ENCODE measurements at regions of chr20 and their contacts with region 1.

Region 1: DNA sequence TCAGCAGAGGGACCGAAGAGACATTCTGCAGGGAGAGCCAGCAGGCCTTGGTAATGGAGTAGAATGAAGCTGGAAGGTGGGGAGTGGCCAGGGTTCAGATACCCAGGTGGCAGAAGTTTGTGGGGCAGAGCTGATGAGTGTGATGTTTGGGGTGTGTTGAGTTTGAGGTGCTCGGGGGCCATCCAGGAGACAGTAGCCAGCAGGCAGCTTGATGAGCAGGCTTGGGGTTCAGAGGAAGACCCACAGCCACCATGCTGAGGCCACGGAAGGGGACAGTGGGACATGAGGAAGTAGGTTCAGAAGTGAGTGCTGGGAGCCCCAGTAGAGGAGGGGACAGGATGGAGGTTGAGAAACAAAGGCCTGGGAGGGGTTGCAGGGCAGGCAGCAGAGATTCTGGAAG is 11.1 kb upstream of the FOXS1 start:
- DNase-seq: no peak
- ATAC-seq: no peak
- H3K4me3 Mint-ChIP-seq: no peak overlapping the region
- H3K27ac Mint-ChIP-seq: no peak overlapping the region
- H3K4me1 Mint-ChIP-seq: peaks cover 6% of the 10 kb centered on the region
- H3K27me3 Mint-ChIP-seq: peaks cover 26% of the 10 kb centered on the region

Region 2: DNA sequence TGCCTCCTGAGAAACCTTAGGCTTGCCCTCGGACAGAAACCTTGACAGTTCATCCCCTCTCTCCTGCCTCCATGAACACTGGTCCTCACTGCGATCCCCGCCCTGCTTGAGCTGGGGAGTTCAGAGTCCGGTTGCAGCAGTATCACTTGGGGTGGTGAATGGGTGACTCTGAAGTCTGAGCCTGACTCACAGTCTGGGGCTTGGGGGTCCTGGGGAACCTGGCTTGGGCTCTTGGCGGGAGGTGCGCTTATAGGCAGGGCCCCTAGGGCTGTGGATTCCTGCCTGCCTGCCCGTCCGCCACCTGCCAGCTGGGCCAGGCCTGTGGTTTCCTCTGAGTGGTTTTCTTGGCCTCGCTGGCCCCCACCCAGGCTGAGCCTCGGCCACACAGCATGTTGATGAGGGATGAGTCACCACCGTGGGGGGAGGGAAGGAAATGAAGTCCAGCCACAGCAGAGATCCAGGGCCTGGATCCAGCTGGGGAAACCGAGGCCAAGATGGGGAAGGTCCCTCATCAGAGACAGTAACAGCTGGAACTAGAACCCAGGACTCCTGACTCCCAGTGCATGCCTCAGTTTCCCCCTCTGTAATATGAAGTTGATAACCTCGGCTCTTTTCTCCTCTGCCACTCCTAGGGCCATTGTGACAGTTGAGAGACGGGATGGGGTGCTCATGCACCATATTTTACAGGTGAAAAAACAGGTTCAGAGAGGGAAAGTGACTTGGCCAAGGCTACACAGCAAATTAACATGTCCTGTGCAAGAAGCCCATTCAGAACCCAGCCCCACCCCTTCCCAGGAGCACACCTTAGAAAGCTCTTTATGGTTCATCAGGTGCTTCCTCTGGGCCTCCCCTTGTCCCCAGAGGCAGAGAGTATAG is 20.3 kb before region 1 on chr20:
- CTCF ChIA-PET with region 1: interaction called, 11 read pairs
- DNase-seq: peak; percentile 77
- ATAC-seq: peak; percentile 61
- H3K4me3 Mint-ChIP-seq: no peak overlapping the region
- H3K27ac Mint-ChIP-seq: no peak overlapping the region
- H3K4me1 Mint-ChIP-seq: peaks cover 25% of the 10 kb centered on the region
- H3K27me3 Mint-ChIP-seq: peaks cover 10% of the 10 kb centered on the region

Region 3: GRCh38 chr20:31879143-31879987 is 22.8 kb after region 1 on chr20:
- CTCF ChIA-PET with region 1: interaction called, 12 read pairs
- DNase-seq: peak; percentile 89
- ATAC-seq: peak; percentile 97
- H3K4me3 Mint-ChIP-seq: peak overlapping the region; percentile 81
- H3K27ac Mint-ChIP-seq: peak overlapping the region; percentile 49
- H3K4me1 Mint-ChIP-seq: peaks cover 15% of the 10 kb centered on the region
- H3K27me3 Mint-ChIP-seq: peaks cover 36% of the 10 kb centered on the region

Measured in activated CD8-positive, alpha-beta memory T cell treated with anti-CD3 and anti-CD28 coated beads, Interleukin-2, amount 10 ng/mL, durations not matched to agents 7 days and 5 days (primary cell).